ENCODE measurements at regions of chr3 and their contacts with region 1.

Region 1: GRCh38 chr3:36993326-36994283 is at the start of gene MLH1:
- DNase-seq: peak in 13 of 14 experiments; percentile 91 to 100 (median 97)
- ATAC-seq: peak; percentile 82
- H3K4me3 ChIP-seq: peak within 1 kb of the TSS; percentile 71
- H3K4me3 Mint-ChIP-seq: no peak within 1 kb of the TSS
- H3K27ac ChIP-seq: peak within 1 kb of the TSS; percentile 98 to 99
- H3K27ac Mint-ChIP-seq: no peak within 1 kb of the TSS
- H3K4me1 ChIP-seq: peaks cover 34% of the 10 kb centered on the region
- H3K4me1 Mint-ChIP-seq: peaks cover 34% of the 10 kb centered on the region
- H3K27me3 ChIP-seq: no peaks in the 10 kb centered on the region
- H3K27me3 Mint-ChIP-seq: no peaks in the 10 kb centered on the region
- CTCF ChIP-seq: no peak
- total RNA-seq, gene MLH1: 18.9 to 23.8 TPM

Region 2: DNA sequence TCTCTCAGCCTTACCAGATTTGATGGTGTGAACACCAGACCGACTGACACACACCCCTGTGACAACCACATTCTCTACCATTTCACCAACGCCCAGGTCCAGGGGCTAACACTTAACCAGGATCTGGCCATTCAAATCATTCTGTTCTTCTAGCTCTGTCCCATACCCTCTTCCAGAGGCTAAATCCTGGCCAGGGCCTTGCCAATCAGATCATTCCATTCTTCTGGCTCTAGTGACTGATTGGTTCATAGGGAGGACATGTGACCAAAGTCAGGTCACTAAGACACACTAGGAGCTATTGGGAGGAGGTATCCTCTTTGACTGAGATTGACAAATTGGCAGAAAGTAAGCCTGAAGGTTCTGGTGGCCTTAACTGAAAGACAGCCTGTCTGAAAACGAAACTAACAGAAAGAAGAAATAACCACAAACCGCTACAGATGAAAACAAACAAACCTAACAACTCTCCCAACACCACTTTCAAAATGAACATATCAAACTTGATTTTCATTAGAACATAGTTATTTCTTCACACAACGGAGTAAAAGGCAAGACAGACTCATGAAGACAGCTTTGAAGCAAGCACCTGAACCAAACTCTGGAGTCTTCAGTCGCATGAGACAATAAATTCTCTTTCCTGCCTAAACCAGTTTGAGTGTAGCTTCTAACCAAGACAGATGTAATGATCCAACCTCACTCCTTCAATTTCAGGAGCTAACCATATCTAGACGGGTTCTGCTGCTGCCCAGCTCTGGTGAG is 117.2 kb before region 1 on chr3:
- CTCF ChIA-PET with region 1: no interaction called
- POLR2A ChIA-PET with region 1: interaction called, 33 read pairs
- intact Hi-C with region 1: no loop called
- DNase-seq: peak in 6 of 14 experiments; percentile 6 to 90 (median 42)
- ATAC-seq: peak; percentile 92
- H3K4me3 ChIP-seq: peak overlapping the region; percentile 40
- H3K4me3 Mint-ChIP-seq: peak overlapping the region; percentile 69
- H3K27ac ChIP-seq: peak overlapping the region; percentile 77 to 80
- H3K27ac Mint-ChIP-seq: peak overlapping the region; percentile 96
- H3K4me1 ChIP-seq: peaks cover 23% of the 10 kb centered on the region
- H3K4me1 Mint-ChIP-seq: peaks cover 72% of the 10 kb centered on the region
- H3K27me3 ChIP-seq: no peaks in the 10 kb centered on the region
- H3K27me3 Mint-ChIP-seq: no peaks in the 10 kb centered on the region
- CTCF ChIP-seq: no peak

Region 3: DNA sequence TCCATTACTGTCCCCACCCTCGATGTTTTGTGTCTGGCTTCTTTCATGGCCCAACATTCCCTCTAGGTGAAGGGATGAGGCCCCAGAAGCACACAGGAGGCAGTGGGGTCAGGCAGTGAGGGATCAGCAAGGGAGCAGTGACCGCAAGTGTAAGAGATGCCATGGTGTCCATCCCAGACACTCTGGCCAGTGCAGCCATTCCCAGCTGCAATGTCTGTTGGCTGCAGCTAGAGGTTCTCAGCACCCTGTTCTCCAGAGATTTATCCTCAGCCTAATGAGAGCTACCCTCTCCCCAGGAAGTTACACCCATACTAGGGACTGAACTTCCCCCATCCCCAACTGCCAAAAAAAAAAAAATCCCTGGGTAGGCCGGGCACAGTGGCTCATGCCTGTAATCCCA is 89.0 kb before region 1 on chr3:
- CTCF ChIA-PET with region 1: interaction called, 3 read pairs
- POLR2A ChIA-PET with region 1: interaction called, 21 read pairs
- intact Hi-C with region 1: loop called in 1 of 2 experiments (anchors 2 kb)
- DNase-seq: no peak
- ATAC-seq: no peak
- H3K4me3 ChIP-seq: no peak overlapping the region
- H3K4me3 Mint-ChIP-seq: peak overlapping the region; percentile 52
- H3K27ac ChIP-seq: peak overlapping the region in 1 of 2 donors; percentile 17
- H3K27ac Mint-ChIP-seq: peak overlapping the region; percentile 93
- H3K4me1 ChIP-seq: peaks cover 75% of the 10 kb centered on the region
- H3K4me1 Mint-ChIP-seq: peaks cover 79% of the 10 kb centered on the region
- H3K27me3 ChIP-seq: no peaks in the 10 kb centered on the region
- H3K27me3 Mint-ChIP-seq: no peaks in the 10 kb centered on the region
- CTCF ChIP-seq: no peak

Region 4: GRCh38 chr3:36944012-36944640 is 49.5 kb before region 1 on chr3:
- CTCF ChIA-PET with region 1: interaction called, 3 read pairs
- POLR2A ChIA-PET with region 1: interaction called, 67 read pairs
- intact Hi-C with region 1: loop called in 1 of 2 experiments (anchors 2 kb)
- DNase-seq: peak; percentile 2 to 55 (median 22)
- ATAC-seq: peak; percentile 35
- H3K4me3 ChIP-seq: peak overlapping the region; percentile 79
- H3K4me3 Mint-ChIP-seq: peak overlapping the region; percentile 89
- H3K27ac ChIP-seq: peak overlapping the region in 1 of 2 donors; percentile 61
- H3K27ac Mint-ChIP-seq: peak overlapping the region; percentile 73
- H3K4me1 ChIP-seq: peaks cover 22% of the 10 kb centered on the region
- H3K4me1 Mint-ChIP-seq: peaks cover 21% of the 10 kb centered on the region
- H3K27me3 ChIP-seq: no peaks in the 10 kb centered on the region
- H3K27me3 Mint-ChIP-seq: no peaks in the 10 kb centered on the region
- CTCF ChIP-seq: no peak

Region 5: GRCh38 chr3:36969540-36970432 is 23.8 kb before region 1 on chr3:
- CTCF ChIA-PET with region 1: interaction called, 5 read pairs
- POLR2A ChIA-PET with region 1: interaction called, 14 read pairs
- intact Hi-C with region 1: no loop called
- DNase-seq: peak in 11 of 14 experiments; percentile 10 to 78 (median 28)
- ATAC-seq: peak; percentile 93
- H3K4me3 ChIP-seq: no peak overlapping the region
- H3K4me3 Mint-ChIP-seq: no peak overlapping the region
- H3K27ac ChIP-seq: no peak overlapping the region
- H3K27ac Mint-ChIP-seq: peak overlapping the region; percentile 22
- H3K4me1 ChIP-seq: peaks cover 18% of the 10 kb centered on the region
- H3K4me1 Mint-ChIP-seq: peaks cover 20% of the 10 kb centered on the region
- H3K27me3 ChIP-seq: no peaks in the 10 kb centered on the region
- H3K27me3 Mint-ChIP-seq: no peaks in the 10 kb centered on the region
- CTCF ChIP-seq: no peak

Region 6: GRCh38 chr3:37096288-37096687 is 102.7 kb after region 1 on chr3:
- CTCF ChIA-PET with region 1: no interaction called
- POLR2A ChIA-PET with region 1: no interaction called
- intact Hi-C with region 1: no loop called
- DNase-seq: no peak
- ATAC-seq: no peak
- H3K4me3 ChIP-seq: no peak overlapping the region
- H3K4me3 Mint-ChIP-seq: no peak overlapping the region
- H3K27ac ChIP-seq: no peak overlapping the region
- H3K27ac Mint-ChIP-seq: no peak overlapping the region
- H3K4me1 ChIP-seq: no peaks in the 10 kb centered on the region
- H3K4me1 Mint-ChIP-seq: no peaks in the 10 kb centered on the region
- H3K27me3 ChIP-seq: no peaks in the 10 kb centered on the region
- H3K27me3 Mint-ChIP-seq: no peaks in the 10 kb centered on the region
- CTCF ChIP-seq: no peak

Region 7: GRCh38 chr3:38669668-38670067 is 1676.1 kb after region 1 on chr3:
- CTCF ChIA-PET with region 1: no interaction called
- POLR2A ChIA-PET with region 1: no interaction called
- intact Hi-C with region 1: no loop called
- DNase-seq: no peak
- ATAC-seq: no peak
- H3K4me3 ChIP-seq: no peak overlapping the region
- H3K4me3 Mint-ChIP-seq: no peak overlapping the region
- H3K27ac ChIP-seq: no peak overlapping the region
- H3K27ac Mint-ChIP-seq: no peak overlapping the region
- H3K4me1 ChIP-seq: no peaks in the 10 kb centered on the region
- H3K4me1 Mint-ChIP-seq: no peaks in the 10 kb centered on the region
- H3K27me3 ChIP-seq: peaks cover 6 to 9% of the 10 kb centered on the region in 2 experiments
- H3K27me3 Mint-ChIP-seq: peaks cover 42% of the 10 kb centered on the region
- CTCF ChIP-seq: no peak

Measured in CD4-positive, alpha-beta T cell (primary cell).